ENCODE measurements at regions of chr6 and their contacts with region 1.

Region 1: GRCh38 chr6:143556529-143556928 is 45.0 kb upstream of the FUCA2 start:
- DNase-seq: peak; percentile 95
- ATAC-seq: peak; percentile 98
- H3K4me3 ChIP-seq: no peak overlapping the region
- H3K27ac ChIP-seq: peak overlapping the region; percentile 66
- H3K4me1 ChIP-seq: no peaks in the 10 kb centered on the region; the same call in 1 of the 2 replicates
- H3K27me3 ChIP-seq: no peaks in the 10 kb centered on the region
- CTCF ChIP-seq: no peak
- POLR2A ChIP-seq: no peak
- RAD21 ChIP-seq: no peak

Region 2: GRCh38 chr6:143450453-143451371 is 105.8 kb before region 1 on chr6 and contains the starts of genes ADAT2 and PEX3:
- CTCF ChIA-PET with region 1: no interaction called
- POLR2A ChIA-PET with region 1: no interaction called
- dilution Hi-C with region 1: no loop called
- in situ Hi-C with region 1: no loop called
- intact Hi-C with region 1: loop called (anchors 5 kb)
- DNase-seq: peak; percentile 92
- ATAC-seq: peak; percentile 99
- H3K4me3 ChIP-seq: peak within 1 kb of the TSS; percentile 75
- H3K27ac ChIP-seq: peak within 1 kb of the TSS; percentile 71
- H3K4me1 ChIP-seq: peaks cover 5% of the 10 kb centered on the region
- H3K27me3 ChIP-seq: no peaks in the 10 kb centered on the region
- CTCF ChIP-seq: no peak
- POLR2A ChIP-seq: peak; percentile 65; the same call in 1 of the 2 replicates
- RAD21 ChIP-seq: 0 out of 2 replicates have a peak, but pooled peaks have one; percentile 14
- total RNA-seq, gene ADAT2: 2.7 and 3.9 TPM in 2 replicates
- total RNA-seq, gene PEX3: 13.3 and 16.4 TPM in 2 replicates

Region 3: DNA sequence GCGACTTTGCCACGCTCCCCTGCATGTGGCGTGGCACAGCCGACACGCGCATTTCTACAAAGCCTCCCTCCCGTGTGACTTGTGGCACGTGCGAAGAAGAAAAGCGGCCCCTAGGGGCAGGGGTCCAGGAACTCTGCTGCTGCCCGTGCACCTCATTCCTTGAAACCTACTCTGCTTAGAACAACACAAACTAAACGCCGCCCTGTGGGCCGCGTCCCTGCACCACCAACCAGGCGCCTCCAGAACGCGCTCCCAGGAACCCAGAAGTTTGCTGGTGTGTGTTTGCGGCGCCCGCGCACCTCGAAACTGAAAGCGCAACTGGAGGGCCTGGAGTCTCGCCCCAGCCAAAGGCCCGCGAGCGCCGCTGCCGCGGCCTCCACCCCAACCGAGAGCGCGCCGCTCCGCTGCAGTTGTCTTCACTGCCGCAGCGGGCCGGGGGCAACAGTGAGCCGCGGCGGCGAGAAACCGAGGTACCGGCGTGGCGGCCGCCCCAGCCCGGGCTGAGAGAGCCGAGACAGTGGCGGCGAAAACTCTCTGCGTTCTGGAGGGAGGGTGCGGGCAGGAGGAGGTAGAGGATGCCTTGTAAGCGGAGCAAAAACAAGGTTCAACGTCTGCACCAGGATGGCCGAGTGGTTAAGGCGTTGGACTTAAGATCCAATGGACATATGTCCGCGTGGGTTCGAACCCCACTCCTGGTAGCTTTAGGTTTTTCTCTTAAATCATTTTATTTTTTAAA is 659.6 kb after region 1 on chr6:
- CTCF ChIA-PET with region 1: no interaction called
- POLR2A ChIA-PET with region 1: no interaction called
- dilution Hi-C with region 1: no loop called
- in situ Hi-C with region 1: no loop called
- intact Hi-C with region 1: no loop called
- DNase-seq: peak; percentile 98
- ATAC-seq: peak; percentile 89
- H3K4me3 ChIP-seq: peak overlapping the region; percentile 58
- H3K27ac ChIP-seq: peak overlapping the region; percentile 72
- H3K4me1 ChIP-seq: peaks cover 8% of the 10 kb centered on the region
- H3K27me3 ChIP-seq: no peaks in the 10 kb centered on the region
- CTCF ChIP-seq: peak; percentile 83
- POLR2A ChIP-seq: 0 out of 2 replicates have a peak, but pooled peaks have one; percentile 33
- RAD21 ChIP-seq: peak; percentile 81